WTC11 (cell line): ENCODE measurements at regions of chr1 and their contacts with region 1.

Region 1: DNA sequence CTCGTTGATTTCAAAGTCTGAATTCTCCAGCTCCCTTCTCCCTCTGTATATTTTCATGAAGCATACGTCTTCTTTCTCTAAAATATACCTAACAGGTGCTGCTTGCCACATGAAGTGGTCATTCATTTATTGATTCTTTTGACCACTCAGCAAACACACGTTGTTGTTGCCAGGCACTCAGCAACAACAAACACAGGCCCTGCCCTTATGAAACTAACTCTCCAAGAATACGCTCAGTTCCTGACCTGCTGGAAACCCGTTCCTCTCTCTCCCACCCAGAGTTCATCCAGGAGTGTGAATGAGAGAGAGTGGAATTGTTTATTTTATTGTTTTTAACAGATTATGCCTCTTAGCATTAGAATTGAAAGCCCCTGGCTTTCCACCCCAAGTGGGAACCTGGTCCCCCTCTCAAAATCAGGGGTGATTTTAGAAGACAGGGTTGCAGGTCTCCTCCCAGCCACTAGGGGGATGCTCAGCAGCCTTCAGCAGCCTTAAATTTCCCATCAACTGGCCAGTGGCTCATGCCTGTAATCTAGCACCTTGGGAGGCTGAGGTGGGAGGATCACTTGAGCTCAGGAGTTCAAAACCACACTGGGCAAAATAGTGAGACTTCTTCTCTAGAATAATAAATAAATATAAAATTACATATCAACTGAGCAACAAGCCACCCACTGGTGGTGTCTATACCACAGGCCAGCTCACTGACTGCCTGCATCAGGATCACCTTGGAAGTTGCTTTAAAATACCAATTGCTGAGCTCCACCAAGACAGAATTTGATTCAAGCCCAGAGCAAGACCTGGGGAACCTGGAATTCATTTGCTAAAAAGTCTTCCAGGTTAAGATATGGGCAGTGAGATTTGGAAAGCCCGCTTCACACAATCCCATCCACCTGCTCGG is 181.0 kb upstream of the KLHDC7A start:
- DNase-seq: peak; percentile 52
- ATAC-seq: peak; percentile 4; the same call in 1 of the 2 replicates
- H3K4me3 Mint-ChIP-seq: no peak overlapping the region; the same call in 1 of the 2 replicates
- H3K27ac Mint-ChIP-seq: peak overlapping the region; percentile 95
- H3K4me1 Mint-ChIP-seq: peaks cover 53% of the 10 kb centered on the region
- H3K27me3 Mint-ChIP-seq: no peaks in the 10 kb centered on the region
- CTCF ChIP-seq: peak; percentile 92

Region 2: GRCh38 chr1:17922833-17923232 is 376.9 kb before region 1 on chr1:
- CTCF ChIA-PET with region 1: interaction called, 12 read pairs
- POLR2A ChIA-PET with region 1: no interaction called
- DNase-seq: peak; percentile 72
- ATAC-seq: peak; percentile 59
- H3K4me3 Mint-ChIP-seq: no peak overlapping the region
- H3K27ac Mint-ChIP-seq: no peak overlapping the region
- H3K4me1 Mint-ChIP-seq: peaks cover 6% of the 10 kb centered on the region
- H3K27me3 Mint-ChIP-seq: peaks cover 6% of the 10 kb centered on the region
- CTCF ChIP-seq: peak; percentile 48

Region 3: DNA sequence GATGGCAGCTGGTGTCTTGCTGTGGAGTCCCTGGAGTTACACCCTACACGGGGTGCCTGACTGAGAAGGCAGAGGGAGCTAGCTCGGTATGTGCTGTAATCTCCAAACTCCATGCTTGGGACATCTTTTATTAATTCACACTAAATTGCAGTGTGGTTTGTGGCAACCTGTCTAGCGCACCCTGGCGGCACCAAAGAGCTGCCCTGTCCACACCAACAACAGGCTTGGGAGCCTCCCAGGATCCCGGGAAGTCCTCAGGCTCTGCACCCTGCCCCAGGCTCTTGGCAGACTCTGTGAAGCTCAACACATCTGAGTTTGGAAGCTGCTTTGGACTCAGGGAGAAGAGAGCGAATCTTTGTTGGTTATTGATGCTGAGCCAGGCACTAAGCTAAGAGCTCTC is 53.1 kb before region 1 on chr1:
- CTCF ChIA-PET with region 1: interaction called, 14 read pairs
- POLR2A ChIA-PET with region 1: no interaction called
- DNase-seq: peak; percentile 35
- ATAC-seq: peak; percentile 65; the same call in 1 of the 2 replicates
- H3K4me3 Mint-ChIP-seq: no peak overlapping the region
- H3K27ac Mint-ChIP-seq: no peak overlapping the region; the same call in 1 of the 2 replicates
- H3K4me1 Mint-ChIP-seq: peaks cover 19% of the 10 kb centered on the region
- H3K27me3 Mint-ChIP-seq: no peaks in the 10 kb centered on the region
- CTCF ChIP-seq: no peak

Region 4: DNA sequence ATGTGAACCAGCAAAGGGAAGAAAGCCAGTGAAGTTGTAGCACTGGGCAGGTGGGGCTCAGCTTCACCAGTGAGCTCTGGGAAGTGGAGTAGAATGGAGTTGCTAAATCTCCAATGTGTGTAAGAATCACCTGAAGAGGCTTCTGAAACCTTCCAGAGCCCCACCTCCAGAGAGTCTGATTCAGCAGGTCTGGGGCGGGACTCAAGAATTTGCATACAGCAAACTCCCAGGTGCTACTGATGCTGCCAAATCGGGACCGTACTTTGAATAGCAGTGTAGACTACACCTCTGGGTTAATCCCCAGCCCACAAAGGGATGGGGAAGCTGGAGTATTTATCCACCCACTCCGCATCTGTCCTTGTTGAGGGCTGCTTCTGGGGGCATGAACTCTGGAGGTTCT is 37.8 kb before region 1 on chr1:
- CTCF ChIA-PET with region 1: interaction called, 16 read pairs
- POLR2A ChIA-PET with region 1: no interaction called
- DNase-seq: peak; percentile 26
- ATAC-seq: peak; percentile 69
- H3K4me3 Mint-ChIP-seq: no peak overlapping the region
- H3K27ac Mint-ChIP-seq: peak overlapping the region; percentile 62; the same call in 1 of the 2 replicates
- H3K4me1 Mint-ChIP-seq: peaks cover 42% of the 10 kb centered on the region
- H3K27me3 Mint-ChIP-seq: no peaks in the 10 kb centered on the region; the same call in 1 of the 2 replicates
- CTCF ChIP-seq: no peak

Region 5: DNA sequence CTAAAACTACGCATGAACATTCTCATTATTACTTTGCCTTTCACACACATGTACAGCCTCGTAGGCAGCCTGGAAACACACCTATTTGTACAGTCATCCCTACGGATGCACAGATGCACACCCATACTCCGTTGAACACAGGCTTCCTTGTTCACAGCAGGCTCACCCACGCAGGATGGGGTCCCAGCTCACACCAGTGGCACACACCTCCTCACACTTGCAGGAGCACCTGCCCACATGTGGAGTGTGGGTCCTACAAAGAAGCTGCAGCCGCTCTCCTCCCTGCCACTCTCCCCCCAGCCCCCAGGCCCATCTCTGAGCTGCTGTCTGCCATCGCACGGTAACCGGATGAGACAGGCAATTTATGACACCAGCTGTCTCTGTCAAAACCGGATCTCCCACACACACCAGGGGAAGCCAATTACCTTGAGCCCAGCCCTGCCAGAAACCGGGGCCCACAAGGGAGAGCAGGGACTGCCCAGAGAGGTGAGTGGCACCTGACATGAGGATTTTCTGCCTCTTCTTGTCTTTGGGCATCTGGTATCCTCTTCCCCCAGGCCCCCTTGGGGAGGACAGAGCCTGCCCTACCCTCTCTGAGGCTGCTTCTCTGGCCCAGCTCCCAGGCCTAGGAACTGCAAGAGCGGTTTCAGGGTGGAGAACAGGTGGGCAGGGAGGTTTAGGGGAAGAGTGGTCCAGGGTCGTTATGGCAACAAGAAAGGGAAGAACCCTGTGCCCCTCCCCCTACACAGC is 16.7 kb before region 1 on chr1:
- CTCF ChIA-PET with region 1: interaction called, 11 read pairs
- POLR2A ChIA-PET with region 1: interaction called, 3 read pairs
- DNase-seq: peak; percentile 83
- ATAC-seq: peak; percentile 44
- H3K4me3 Mint-ChIP-seq: no peak overlapping the region
- H3K27ac Mint-ChIP-seq: no peak overlapping the region; the same call in 1 of the 2 replicates
- H3K4me1 Mint-ChIP-seq: peaks cover 81% of the 10 kb centered on the region
- H3K27me3 Mint-ChIP-seq: no peaks in the 10 kb centered on the region
- CTCF ChIP-seq: no peak

Region 6: GRCh38 chr1:18322368-18323032 is 22.8 kb after region 1 on chr1:
- CTCF ChIA-PET with region 1: interaction called, 32 read pairs
- POLR2A ChIA-PET with region 1: no interaction called
- DNase-seq: peak; percentile 66
- ATAC-seq: peak; percentile 67
- H3K4me3 Mint-ChIP-seq: no peak overlapping the region
- H3K27ac Mint-ChIP-seq: no peak overlapping the region
- H3K4me1 Mint-ChIP-seq: peaks cover 29% of the 10 kb centered on the region
- H3K27me3 Mint-ChIP-seq: peaks cover 38% of the 10 kb centered on the region
- CTCF ChIP-seq: peak; percentile 75

Region 7: DNA sequence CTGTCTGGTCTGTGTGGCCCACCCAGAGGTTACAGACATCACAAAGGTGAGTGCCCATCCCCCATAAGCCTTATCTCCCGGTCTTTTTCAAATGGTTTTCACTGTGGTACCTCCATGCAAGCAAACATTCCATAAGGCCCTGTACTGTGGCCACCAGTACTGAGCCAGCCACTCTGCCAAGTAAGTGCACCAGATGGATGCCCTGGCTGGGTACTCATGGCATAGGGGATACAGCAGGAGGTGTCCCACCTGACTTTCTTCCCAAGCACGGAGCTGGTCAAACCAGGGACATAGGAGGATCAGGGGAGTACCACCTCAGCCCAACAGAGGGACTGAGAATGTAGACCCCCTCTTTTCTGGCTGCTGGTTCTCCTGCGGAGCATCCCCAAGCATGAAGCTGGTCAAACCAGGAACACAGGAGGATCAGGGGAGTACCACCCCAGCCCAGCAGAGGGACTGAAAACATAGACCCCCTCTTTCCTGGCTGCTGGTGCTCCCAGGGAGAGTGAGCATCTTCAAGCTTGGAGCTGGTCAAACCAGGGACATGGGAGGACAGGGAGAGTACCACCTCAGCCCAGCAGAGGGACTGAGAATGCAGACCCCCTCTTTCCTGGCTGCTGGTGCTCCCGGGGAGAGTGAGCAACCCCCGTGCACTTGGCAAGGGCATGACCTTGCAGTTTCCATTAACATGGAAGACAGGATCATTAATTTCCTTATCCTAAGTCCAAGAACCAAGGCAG is 99.3 kb after region 1 on chr1:
- CTCF ChIA-PET with region 1: no interaction called
- POLR2A ChIA-PET with region 1: no interaction called
- DNase-seq: peak; percentile 48
- ATAC-seq: peak; percentile 77
- H3K4me3 Mint-ChIP-seq: no peak overlapping the region
- H3K27ac Mint-ChIP-seq: no peak overlapping the region
- H3K4me1 Mint-ChIP-seq: peaks cover 41% of the 10 kb centered on the region
- H3K27me3 Mint-ChIP-seq: peaks cover 3% of the 10 kb centered on the region
- CTCF ChIP-seq: no peak

Region 8: DNA sequence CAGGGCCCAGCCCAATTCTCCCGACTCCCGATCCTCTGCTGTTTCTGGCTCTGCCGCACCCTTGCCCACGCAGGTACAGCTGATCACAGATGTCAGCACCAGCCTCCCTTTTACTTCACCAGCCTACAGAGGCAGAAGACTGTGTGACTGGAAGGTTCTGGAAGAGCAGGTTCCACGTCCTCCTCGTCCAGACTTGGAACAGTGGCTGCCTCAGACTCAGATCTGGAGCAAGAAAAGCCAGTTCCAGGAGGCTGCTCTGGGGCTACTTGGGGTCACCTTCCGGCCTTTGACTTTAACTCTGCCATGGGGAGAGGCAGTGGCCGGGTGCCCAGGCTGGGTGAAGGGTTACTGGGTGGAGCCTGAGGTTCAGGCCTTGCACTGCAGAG is 165.0 kb after region 1 on chr1:
- CTCF ChIA-PET with region 1: no interaction called
- POLR2A ChIA-PET with region 1: no interaction called
- DNase-seq: no peak
- ATAC-seq: no peak
- H3K4me3 Mint-ChIP-seq: no peak overlapping the region
- H3K27ac Mint-ChIP-seq: no peak overlapping the region
- H3K4me1 Mint-ChIP-seq: peaks cover 11% of the 10 kb centered on the region
- H3K27me3 Mint-ChIP-seq: peaks cover 37% of the 10 kb centered on the region
- CTCF ChIP-seq: no peak

Region 9: DNA sequence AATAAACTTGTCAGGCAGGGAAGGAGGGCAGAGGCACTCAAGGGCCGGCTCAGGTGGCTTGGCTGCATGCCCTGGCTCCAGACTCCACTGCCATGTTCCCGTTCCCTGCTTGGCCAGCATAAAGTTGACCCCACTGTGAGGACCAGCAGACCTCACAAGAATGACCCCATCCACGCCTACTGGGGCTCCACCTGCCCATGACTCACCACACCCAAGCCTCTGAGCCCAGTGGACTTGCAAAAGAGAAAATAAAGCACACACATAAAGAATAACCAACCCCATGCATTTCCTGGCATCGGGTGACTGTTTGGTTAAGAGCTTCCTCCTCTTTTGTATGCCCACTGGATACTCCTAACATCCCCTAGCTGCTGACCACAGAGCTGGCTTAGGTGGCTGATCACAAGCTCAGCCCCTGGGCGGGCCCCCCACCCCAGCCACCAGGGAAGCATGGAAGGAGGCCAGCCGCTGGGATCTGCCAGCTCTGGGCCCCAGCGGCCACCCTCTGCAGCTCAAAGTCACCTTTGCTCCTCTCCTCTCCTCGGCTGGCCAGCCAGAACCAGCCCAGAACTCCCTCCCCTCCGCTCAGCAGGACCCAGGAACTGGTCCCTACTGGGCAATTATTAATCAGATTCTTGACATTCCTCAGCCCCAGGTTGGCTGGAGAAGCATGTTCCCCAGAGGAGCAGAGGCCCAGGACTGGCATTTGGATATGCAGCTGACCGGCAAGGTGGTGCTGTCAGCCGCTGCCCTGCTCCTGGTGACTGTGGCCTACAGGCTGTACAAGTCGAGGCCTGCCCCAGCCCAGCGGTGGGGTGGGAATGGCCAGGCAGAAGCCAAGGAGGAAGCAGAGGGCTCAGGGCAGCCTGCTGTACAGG is 180.9 kb after region 1 on chr1 and contains the start of gene KLHDC7A:
- CTCF ChIA-PET with region 1: interaction called, 11 read pairs
- POLR2A ChIA-PET with region 1: no interaction called
- DNase-seq: peak; percentile 85
- ATAC-seq: peak; percentile 91
- H3K4me3 Mint-ChIP-seq: peak within 1 kb of the TSS; percentile 36
- H3K27ac Mint-ChIP-seq: peak within 1 kb of the TSS; percentile 94
- H3K4me1 Mint-ChIP-seq: peaks cover 49% of the 10 kb centered on the region
- H3K27me3 Mint-ChIP-seq: no peaks in the 10 kb centered on the region; the same call in 1 of the 2 replicates
- CTCF ChIP-seq: no peak
- total RNA-seq, gene KLHDC7A: 10.9 to 14.3 TPM (median 11.0 TPM) in 3 replicates